ENCODE measurements at regions of chr12 and their contacts with region 1.

Region 1: GRCh38 chr12:26853303-26854030 is 20.5 kb upstream of the ITPR2 start:
- DNase-seq: peak; percentile 66
- H3K4me3 ChIP-seq: no peak overlapping the region
- H3K27ac ChIP-seq: no peak overlapping the region
- H3K4me1 ChIP-seq: no peaks in the 10 kb centered on the region
- H3K27me3 ChIP-seq: no peaks in the 10 kb centered on the region
- CTCF ChIP-seq: peak; percentile 79

Region 2: GRCh38 chr12:26884765-26885576 is 31.5 kb after region 1 on chr12:
- intact Hi-C with region 1: loop called (anchors 1 kb)
- DNase-seq: peak; percentile 92
- H3K4me3 ChIP-seq: no peak overlapping the region
- H3K27ac ChIP-seq: no peak overlapping the region
- H3K4me1 ChIP-seq: peaks cover 3% of the 10 kb centered on the region
- H3K27me3 ChIP-seq: no peaks in the 10 kb centered on the region
- CTCF ChIP-seq: peak; percentile 91

Region 3: GRCh38 chr12:27014085-27014858 is 160.8 kb after region 1 on chr12 and contains the start of gene TM7SF3:
- intact Hi-C with region 1: loop called (anchors 10 kb)
- DNase-seq: peak; percentile 96
- H3K4me3 ChIP-seq: peak within 1 kb of the TSS; percentile 80
- H3K27ac ChIP-seq: peak within 1 kb of the TSS; percentile 90
- H3K4me1 ChIP-seq: peaks cover 8% of the 10 kb centered on the region
- H3K27me3 ChIP-seq: no peaks in the 10 kb centered on the region
- CTCF ChIP-seq: peak; percentile 97
- total RNA-seq, gene TM7SF3: 50.0 to 59.1 TPM

Measured in colonic mucosa (tissue), 4 donors.